Calu3 (cell line): ENCODE measurements at regions of chr5 and their contacts with region 1.

Region 1: GRCh38 chr5:94740286-94740685 is 121.8 kb downstream of the SLF1 start:
- DNase-seq: no peak
- H3K4me3 Mint-ChIP-seq: no peak overlapping the region
- H3K27ac Mint-ChIP-seq: no peak overlapping the region
- H3K4me1 Mint-ChIP-seq: no peaks in the 10 kb centered on the region
- H3K27me3 Mint-ChIP-seq: no peaks in the 10 kb centered on the region
- CTCF ChIP-seq: no peak

Region 2: DNA sequence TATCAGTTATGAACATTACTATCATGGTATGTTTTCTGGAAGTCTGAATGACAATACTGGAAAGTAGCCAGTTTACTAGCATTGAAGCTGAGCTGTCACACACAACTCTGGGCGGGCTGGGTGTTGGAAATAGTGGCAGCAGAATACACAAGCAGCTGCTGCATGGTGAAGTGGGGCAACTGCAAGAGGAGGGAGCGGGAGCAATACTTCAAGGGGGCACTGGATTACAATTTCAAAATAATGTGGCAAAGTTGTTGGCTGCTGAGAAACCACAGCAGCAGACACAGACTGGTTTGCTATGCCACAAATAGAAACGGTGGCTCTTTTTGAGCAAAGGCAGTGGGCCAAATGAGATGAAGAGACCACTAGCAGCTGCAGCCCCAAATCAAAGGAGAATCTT is 472.1 kb before region 1 on chr5:
- CTCF ChIA-PET with region 1: no interaction called
- intact Hi-C with region 1: no loop called
- DNase-seq: no peak
- H3K4me3 Mint-ChIP-seq: no peak overlapping the region
- H3K27ac Mint-ChIP-seq: no peak overlapping the region
- H3K4me1 Mint-ChIP-seq: no peaks in the 10 kb centered on the region
- H3K27me3 Mint-ChIP-seq: no peaks in the 10 kb centered on the region
- CTCF ChIP-seq: no peak

Region 3: DNA sequence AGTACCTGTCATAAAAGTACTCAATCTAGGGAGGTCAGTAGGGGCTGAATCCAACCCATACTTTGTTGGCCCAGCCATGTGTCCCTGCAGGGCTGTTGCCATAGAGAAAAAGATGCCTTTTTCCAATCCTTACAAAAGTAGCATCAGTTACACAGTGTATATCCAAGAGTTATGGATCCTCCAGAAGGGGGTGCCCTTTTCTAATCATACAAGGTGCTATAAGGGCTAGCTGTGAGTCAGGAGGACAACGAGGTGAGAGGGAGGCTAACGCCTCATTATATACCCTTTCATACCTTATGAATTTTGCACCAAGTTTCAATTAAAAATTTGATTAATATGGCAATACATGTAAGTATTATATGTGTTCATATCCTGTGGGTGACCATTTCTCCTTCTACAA is 126.7 kb before region 1 on chr5:
- CTCF ChIA-PET with region 1: interaction called, 5 read pairs
- intact Hi-C with region 1: loop called (anchors 2 kb)
- DNase-seq: peak; percentile 23
- H3K4me3 Mint-ChIP-seq: no peak overlapping the region
- H3K27ac Mint-ChIP-seq: no peak overlapping the region
- H3K4me1 Mint-ChIP-seq: peaks cover 7% of the 10 kb centered on the region
- H3K27me3 Mint-ChIP-seq: no peaks in the 10 kb centered on the region
- CTCF ChIP-seq: peak; percentile 21

Region 4: GRCh38 chr5:94849821-94850736 is 109.8 kb after region 1 on chr5:
- CTCF ChIA-PET with region 1: interaction called, 3 read pairs
- intact Hi-C with region 1: loop called (anchors 5 kb)
- DNase-seq: peak; percentile 19
- H3K4me3 Mint-ChIP-seq: no peak overlapping the region
- H3K27ac Mint-ChIP-seq: no peak overlapping the region
- H3K4me1 Mint-ChIP-seq: no peaks in the 10 kb centered on the region
- H3K27me3 Mint-ChIP-seq: no peaks in the 10 kb centered on the region
- CTCF ChIP-seq: peak; percentile 62